GM12878 (cell line): ENCODE measurements at regions of chr1 and their contacts with region 1.

Region 1: GRCh38 chr1:28172713-28173150 is 3.8 kb downstream of the PTAFR start:
- DNase-seq: peak; percentile 98
- ATAC-seq: peak; percentile 59
- H3K4me3 ChIP-seq: 0 out of 2 replicates have a peak overlapping the region, but pooled peaks have one; percentile 30
- H3K27ac ChIP-seq: peak overlapping the region; percentile 69
- H3K4me1 ChIP-seq: peaks cover 82% of the 10 kb centered on the region
- H3K27me3 ChIP-seq: no peaks in the 10 kb centered on the region
- CTCF ChIP-seq: no peak
- EP300 ChIP-seq: peak; percentile 92 to 98
- POLR2A ChIP-seq: 0 out of 2 replicates have a peak, but pooled peaks have one; percentile 21
- RAD21 ChIP-seq: 0 out of 2 replicates have a peak, but pooled peaks have one; percentile 3

Region 2: GRCh38 chr1:27858072-27858958 is 314.4 kb before region 1 on chr1:
- CTCF ChIA-PET with region 1: no interaction called
- POLR2A ChIA-PET with region 1: no interaction called
- RAD21 ChIA-PET with region 1: no interaction called
- SMC1A ChIA-PET with region 1: no interaction called
- in situ Hi-C with region 1: no loop called
- intact Hi-C with region 1: loop called (anchors 10 kb)
- DNase-seq: no peak
- ATAC-seq: peak; percentile 91
- H3K4me3 ChIP-seq: no peak overlapping the region
- H3K27ac ChIP-seq: no peak overlapping the region
- H3K4me1 ChIP-seq: peaks cover 17% of the 10 kb centered on the region
- H3K27me3 ChIP-seq: no peaks in the 10 kb centered on the region
- CTCF ChIP-seq: peak; percentile 99 to 100 (median 99); a peak in 5 of 6 replicates
- EP300 ChIP-seq: no peak
- POLR2A ChIP-seq: no peak
- RAD21 ChIP-seq: peak; percentile 100

Region 3: DNA sequence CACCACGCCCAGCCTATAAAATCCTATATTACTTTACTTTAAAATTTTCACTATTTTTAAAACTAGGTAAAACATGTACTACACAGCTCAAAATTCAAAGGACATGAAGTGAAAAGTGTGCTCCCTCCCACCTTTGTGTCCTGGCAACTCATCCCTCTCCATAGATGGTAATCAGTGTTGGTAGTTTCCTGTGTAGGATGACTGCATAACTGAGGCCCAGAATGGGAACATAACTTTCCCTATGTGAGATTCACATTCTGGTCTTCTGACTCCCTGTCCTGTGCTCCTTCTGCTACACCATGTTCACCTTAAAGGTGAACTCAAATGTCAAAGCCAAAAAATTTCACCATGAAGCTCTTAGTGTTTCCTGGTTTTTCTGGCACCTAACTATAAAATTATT is 173.7 kb before region 1 on chr1:
- CTCF ChIA-PET with region 1: no interaction called
- POLR2A ChIA-PET with region 1: no interaction called
- RAD21 ChIA-PET with region 1: no interaction called
- SMC1A ChIA-PET with region 1: no interaction called
- in situ Hi-C with region 1: no loop called
- intact Hi-C with region 1: no loop called
- DNase-seq: no peak
- ATAC-seq: no peak
- H3K4me3 ChIP-seq: no peak overlapping the region
- H3K27ac ChIP-seq: no peak overlapping the region
- H3K4me1 ChIP-seq: no peaks in the 10 kb centered on the region
- H3K27me3 ChIP-seq: no peaks in the 10 kb centered on the region
- CTCF ChIP-seq: no peak
- EP300 ChIP-seq: no peak
- POLR2A ChIP-seq: no peak
- RAD21 ChIP-seq: no peak

Region 4: GRCh38 chr1:28127617-28128257 is 45.0 kb before region 1 on chr1:
- CTCF ChIA-PET with region 1: interaction called, 4 read pairs
- POLR2A ChIA-PET with region 1: interaction called, 9 read pairs
- RAD21 ChIA-PET with region 1: interaction called, 4 read pairs
- SMC1A ChIA-PET with region 1: interaction called, 5 read pairs
- in situ Hi-C with region 1: no loop called
- intact Hi-C with region 1: loop called (anchors 1 kb)
- DNase-seq: peak; percentile 84
- ATAC-seq: peak; percentile 83
- H3K4me3 ChIP-seq: no peak overlapping the region
- H3K27ac ChIP-seq: no peak overlapping the region
- H3K4me1 ChIP-seq: peaks cover 43% of the 10 kb centered on the region
- H3K27me3 ChIP-seq: no peaks in the 10 kb centered on the region
- CTCF ChIP-seq: no peak
- EP300 ChIP-seq: peak in 1 of 2 experiments; percentile 57; a peak in 1 of 4 replicates
- POLR2A ChIP-seq: no peak
- RAD21 ChIP-seq: no peak

Region 5: GRCh38 chr1:28144203-28145135 is 28.3 kb before region 1 on chr1:
- CTCF ChIA-PET with region 1: interaction called, 10 read pairs
- POLR2A ChIA-PET with region 1: interaction called, 14 read pairs
- RAD21 ChIA-PET with region 1: interaction called, 119 read pairs
- SMC1A ChIA-PET with region 1: interaction called, 42 read pairs
- in situ Hi-C with region 1: no loop called
- intact Hi-C with region 1: loop called (anchors 1 kb)
- DNase-seq: peak; percentile 97
- ATAC-seq: peak; percentile 91
- H3K4me3 ChIP-seq: peak overlapping the region; percentile 17
- H3K27ac ChIP-seq: peak overlapping the region; percentile 62
- H3K4me1 ChIP-seq: peaks cover 51% of the 10 kb centered on the region
- H3K27me3 ChIP-seq: no peaks in the 10 kb centered on the region
- CTCF ChIP-seq: no peak
- EP300 ChIP-seq: peak; percentile 54 to 94; a peak in 3 of 4 replicates
- POLR2A ChIP-seq: no peak
- RAD21 ChIP-seq: no peak

Region 6: GRCh38 chr1:28199328-28200233 is 26.8 kb after region 1 on chr1:
- CTCF ChIA-PET with region 1: interaction called, 18 read pairs
- POLR2A ChIA-PET with region 1: interaction called, 64 read pairs
- RAD21 ChIA-PET with region 1: interaction called, 68 read pairs
- SMC1A ChIA-PET with region 1: interaction called, 74 read pairs
- in situ Hi-C with region 1: no loop called
- intact Hi-C with region 1: loop called (anchors 1 kb)
- DNase-seq: peak; percentile 99
- ATAC-seq: peak; percentile 91
- H3K4me3 ChIP-seq: peak overlapping the region; percentile 57; the same call in 1 of the 2 replicates
- H3K27ac ChIP-seq: peak overlapping the region; percentile 83
- H3K4me1 ChIP-seq: peaks cover 44% of the 10 kb centered on the region
- H3K27me3 ChIP-seq: no peaks in the 10 kb centered on the region
- CTCF ChIP-seq: no peak
- EP300 ChIP-seq: peak; percentile 85 to 98
- POLR2A ChIP-seq: peak; percentile 58; the same call in 1 of the 2 replicates
- RAD21 ChIP-seq: peak; percentile 29; the same call in 1 of the 2 replicates

Region 7: DNA sequence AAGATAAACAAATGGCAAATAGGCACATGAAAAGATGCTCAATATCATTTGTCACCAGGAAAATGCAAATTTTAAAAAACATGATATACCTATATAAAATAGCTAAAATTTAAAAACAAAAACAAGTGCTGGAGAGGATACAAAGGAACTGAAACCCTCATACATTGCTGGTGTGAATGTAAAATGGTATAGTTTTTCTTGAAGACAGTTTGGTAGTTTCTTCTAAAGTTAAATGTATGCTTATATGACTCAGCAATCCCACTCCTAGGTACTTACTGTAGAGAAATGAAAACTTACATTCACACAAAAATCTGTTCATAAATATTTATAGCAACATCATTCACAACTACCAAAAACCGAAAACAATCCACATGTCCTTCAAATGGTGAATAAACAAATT is 459.0 kb after region 1 on chr1:
- CTCF ChIA-PET with region 1: no interaction called
- POLR2A ChIA-PET with region 1: no interaction called
- RAD21 ChIA-PET with region 1: no interaction called
- SMC1A ChIA-PET with region 1: no interaction called
- in situ Hi-C with region 1: no loop called
- intact Hi-C with region 1: no loop called
- DNase-seq: no peak
- ATAC-seq: peak; percentile 86
- H3K4me3 ChIP-seq: no peak overlapping the region
- H3K27ac ChIP-seq: peak overlapping the region; percentile 48; the same call in 1 of the 2 replicates
- H3K4me1 ChIP-seq: peaks cover 13% of the 10 kb centered on the region
- H3K27me3 ChIP-seq: no peaks in the 10 kb centered on the region
- CTCF ChIP-seq: no peak
- EP300 ChIP-seq: peak in 1 of 2 experiments; percentile 47; a peak in 2 of 4 replicates
- POLR2A ChIP-seq: no peak
- RAD21 ChIP-seq: no peak